ENCODE measurements at regions of chr7 and their contacts with region 1.

Region 1: DNA sequence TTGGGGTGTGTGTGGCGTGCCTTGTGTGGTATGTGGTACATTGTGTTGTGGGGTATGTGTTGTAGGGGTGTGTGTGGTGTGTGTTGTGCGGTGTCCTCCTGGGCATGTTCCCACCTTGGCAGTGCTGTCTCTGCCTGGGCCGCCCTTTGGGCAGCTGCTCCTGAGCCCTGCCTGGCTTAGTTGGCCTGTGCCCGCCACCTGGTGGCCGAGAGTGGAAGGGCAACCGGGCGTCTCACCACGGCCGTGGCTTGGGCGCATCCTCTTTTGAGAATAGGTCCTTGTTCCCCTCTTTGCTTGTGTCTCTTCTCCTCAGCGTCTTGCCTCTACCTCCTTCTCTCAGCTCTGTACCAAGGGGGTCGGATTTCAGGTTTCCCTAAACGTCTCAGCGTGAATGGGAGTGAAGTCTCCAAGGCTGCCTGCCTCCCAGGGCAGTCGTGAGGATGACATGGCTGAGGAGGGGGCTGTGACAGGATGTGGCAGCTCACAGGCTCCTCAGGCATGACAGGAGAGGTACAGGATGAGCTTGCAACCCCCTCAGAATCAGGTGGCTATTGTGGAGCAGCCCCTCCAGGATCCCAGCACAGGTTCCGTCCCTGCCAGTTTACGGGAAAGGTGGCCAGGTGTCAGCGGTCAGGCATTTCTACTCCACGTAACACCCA is 98.4 kb upstream of the PODXL start:
- DNase-seq: peak; percentile 60 to 88
- ATAC-seq: peak; percentile 94

Region 2: DNA sequence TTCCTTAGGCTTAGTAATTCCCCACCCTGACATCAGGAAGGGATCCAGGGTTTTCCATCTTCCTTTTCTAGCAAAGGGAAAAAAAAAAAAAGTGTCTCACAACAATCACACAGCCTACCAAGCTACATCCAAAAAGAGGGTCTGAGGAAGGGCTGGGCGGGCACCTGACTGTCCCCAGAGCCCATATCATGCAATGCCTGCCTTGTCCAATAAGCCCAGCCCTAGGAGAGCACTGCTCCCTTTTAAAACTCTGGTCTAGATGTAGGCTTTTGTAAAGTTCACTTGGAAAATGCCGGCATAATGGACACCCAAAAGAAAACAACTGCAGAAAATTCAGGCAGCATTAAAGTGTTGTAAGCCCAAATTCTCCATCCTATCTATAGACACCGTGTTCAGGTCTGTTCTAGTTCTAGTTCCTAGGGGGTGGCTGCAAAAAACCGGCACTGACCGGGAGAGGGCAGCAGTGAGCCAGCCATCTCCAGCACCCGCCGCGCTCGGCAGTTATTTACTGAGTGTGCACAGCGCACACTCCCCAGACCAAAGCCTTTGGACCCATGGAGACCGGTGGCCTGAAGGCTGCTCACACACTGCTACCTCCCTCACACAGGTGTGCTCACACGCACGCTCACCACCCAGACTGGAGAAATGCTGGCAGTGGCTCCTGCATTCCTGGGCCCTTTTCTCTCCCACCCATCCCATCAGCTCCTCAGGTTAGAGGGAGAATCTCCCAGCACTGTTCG is 147.0 kb before region 1 on chr7:
- intact Hi-C with region 1: loop called (anchors 2 to 10 kb)
- DNase-seq: peak; percentile 73 to 91
- ATAC-seq: peak; percentile 86

Region 3: GRCh38 chr7:131556052-131556908 is 98.5 kb before region 1 on chr7 and contains the start of gene PODXL:
- intact Hi-C with region 1: loop called in 1 of 2 experiments (anchors 5 kb)
- DNase-seq: peak; percentile 64 to 76
- ATAC-seq: peak; percentile 84
- total RNA-seq, gene PODXL: 9.2 to 13.7 TPM

Region 4: DNA sequence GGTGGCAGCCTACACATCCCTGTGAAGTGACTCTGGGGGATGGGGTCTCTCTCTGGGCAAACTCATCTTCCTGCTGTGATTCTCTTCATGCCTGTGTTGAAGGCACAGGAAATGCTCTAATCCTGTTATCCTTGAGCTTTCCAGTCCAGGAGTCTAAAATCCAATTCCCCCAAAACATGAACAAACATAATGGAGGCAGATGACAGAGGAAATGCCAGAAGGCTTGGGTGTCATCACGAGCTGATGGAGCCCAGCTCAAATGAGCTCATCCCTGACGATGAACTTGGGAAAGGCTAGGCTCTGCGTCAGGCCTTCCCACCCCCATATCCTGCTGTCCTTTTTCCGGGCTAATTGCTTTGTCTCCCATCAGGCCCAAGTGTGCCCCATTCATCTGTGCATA is 67.6 kb after region 1 on chr7:
- intact Hi-C with region 1: no loop called
- DNase-seq: no peak
- ATAC-seq: no peak

Region 5: GRCh38 chr7:132117211-132117610 is 462.4 kb after region 1 on chr7:
- intact Hi-C with region 1: no loop called
- DNase-seq: no peak
- ATAC-seq: no peak